ENCODE measurements at regions of chr6 and their contacts with region 1.

Region 1: DNA sequence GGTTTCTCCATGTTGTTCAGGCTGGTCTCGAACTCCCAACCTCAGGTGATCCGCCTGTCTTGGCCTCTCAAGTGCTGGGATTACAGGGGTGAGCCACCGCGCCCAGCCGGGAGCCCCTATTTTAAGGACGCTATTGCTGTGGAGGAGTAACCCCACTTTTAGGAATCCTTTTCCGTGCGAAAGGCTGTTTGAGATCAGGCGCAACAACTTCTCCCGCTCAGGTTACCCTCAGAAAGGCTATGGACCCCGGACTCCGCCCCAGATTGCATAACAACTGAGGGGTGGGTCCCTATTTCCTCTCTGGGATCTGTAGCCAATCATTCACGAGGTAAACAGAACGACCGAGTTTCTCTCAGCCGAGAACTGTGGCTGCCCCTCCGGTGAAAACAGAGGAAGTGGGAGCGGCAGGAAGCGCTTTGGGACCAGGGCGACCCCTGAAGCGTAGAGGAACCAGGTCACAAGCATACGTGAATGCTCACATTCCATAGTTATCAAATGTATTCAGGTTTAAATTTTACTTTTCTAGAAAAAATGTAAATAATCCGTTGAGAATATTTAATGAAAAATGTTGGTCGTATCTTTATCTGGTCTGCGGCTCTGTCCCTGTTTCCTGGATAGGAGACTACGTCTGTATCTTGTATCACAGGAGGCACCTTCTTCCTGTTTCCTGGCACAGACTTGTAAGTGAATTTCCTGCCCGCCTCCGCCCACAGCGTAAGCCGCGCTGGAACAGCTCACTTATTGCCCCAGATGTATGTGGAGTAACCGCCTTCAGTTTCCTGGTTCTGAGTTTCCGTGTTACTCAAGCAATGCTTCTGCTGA is 26.8 kb downstream of the HLA-E start:
- DNase-seq: peak; percentile 96
- ATAC-seq: peak; percentile 87
- H3K4me3 Mint-ChIP-seq: peak overlapping the region; percentile 74
- H3K27ac Mint-ChIP-seq: peak overlapping the region; percentile 98
- H3K4me1 Mint-ChIP-seq: peaks cover 69% of the 10 kb centered on the region
- H3K27me3 Mint-ChIP-seq: no peaks in the 10 kb centered on the region

Region 2: DNA sequence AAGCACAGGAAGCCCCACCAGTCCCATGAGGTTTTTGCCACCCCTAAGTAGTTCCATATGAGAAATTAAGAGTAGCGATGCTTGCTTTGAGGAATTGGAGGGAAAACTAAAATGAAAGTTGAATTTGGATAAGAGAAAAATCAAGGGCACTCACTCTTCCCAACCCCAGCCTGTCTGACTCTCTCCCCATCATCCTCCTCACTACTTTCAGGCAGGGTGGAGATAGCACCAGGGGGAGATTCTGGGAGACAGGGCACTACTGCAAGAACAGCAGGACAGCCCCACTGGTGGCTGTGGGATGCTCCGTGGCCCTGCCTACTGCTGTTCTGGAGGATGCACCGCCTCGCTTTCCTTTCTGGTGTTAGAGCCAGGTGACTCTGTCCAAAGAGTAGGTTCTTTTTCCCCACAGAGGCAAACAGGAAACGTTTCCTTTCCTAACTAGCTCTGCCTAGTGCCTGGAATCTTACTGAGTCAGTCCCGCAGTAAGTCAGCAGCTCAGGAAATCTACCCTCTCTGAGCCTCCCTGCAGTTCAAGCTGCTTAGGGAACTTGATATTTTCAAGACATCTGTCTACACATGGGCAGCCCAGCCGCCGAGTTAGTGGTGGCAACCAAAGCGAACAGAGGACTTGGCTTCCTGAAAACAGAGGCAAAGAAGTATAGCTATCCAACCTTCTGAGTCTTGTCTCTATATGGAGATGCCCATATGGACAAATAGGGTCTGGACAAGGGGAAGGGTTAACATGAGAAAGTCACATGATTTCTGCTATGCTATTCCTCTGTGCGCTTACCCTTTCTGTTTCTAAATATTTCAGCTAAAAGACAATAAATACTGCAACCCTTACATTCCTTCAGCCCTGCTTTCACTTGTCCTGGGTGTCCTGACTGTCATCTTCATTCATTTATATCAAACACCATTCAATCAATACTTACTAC is 15.5 kb before region 1 on chr6:
- CTCF ChIA-PET with region 1: interaction called, 8 read pairs
- POLR2A ChIA-PET with region 1: interaction called, 3 read pairs
- intact Hi-C with region 1: loop called in 1 of 2 experiments (anchors 1 kb)
- DNase-seq: peak; percentile 43
- ATAC-seq: peak; percentile 37
- H3K4me3 Mint-ChIP-seq: peak overlapping the region; percentile 65
- H3K27ac Mint-ChIP-seq: peak overlapping the region; percentile 88
- H3K4me1 Mint-ChIP-seq: peaks cover 43% of the 10 kb centered on the region
- H3K27me3 Mint-ChIP-seq: no peaks in the 10 kb centered on the region

Measured in activated CD4-positive, alpha-beta T cell treated with anti-CD3 and anti-CD28 coated beads for 36 hours (primary cell).